GM10248 (cell line): ENCODE measurements at regions of chr9 and their contacts with region 1.

Region 1: GRCh38 chr9:124708633-124709291 is 62.3 kb downstream of the NR6A1 start:
- DNase-seq: no peak
- CTCF ChIP-seq: no peak

Region 2: DNA sequence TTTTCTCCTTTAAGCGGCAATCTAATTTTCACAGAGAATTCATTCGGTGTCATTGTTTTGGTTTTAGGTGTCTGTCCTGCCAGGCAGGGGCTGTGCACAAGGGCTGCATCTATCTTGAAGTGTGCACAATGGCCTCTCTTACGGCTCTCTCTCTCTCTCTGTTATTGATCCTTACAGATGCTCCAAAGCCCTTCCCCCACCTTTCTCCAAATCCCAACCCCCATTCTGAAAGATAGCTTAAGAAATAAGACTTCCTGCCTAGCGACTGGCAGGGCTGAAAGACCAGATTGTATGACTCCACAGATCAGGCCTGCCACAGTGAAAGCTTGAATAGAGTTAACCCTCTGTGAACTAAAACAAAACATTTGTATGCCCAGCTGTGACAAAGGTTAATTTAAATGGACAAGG is 115.1 kb before region 1 on chr9:
- CTCF ChIA-PET with region 1: interaction called, 27 read pairs
- POLR2A ChIA-PET with region 1: no interaction called
- DNase-seq: no peak
- CTCF ChIP-seq: no peak

Region 3: DNA sequence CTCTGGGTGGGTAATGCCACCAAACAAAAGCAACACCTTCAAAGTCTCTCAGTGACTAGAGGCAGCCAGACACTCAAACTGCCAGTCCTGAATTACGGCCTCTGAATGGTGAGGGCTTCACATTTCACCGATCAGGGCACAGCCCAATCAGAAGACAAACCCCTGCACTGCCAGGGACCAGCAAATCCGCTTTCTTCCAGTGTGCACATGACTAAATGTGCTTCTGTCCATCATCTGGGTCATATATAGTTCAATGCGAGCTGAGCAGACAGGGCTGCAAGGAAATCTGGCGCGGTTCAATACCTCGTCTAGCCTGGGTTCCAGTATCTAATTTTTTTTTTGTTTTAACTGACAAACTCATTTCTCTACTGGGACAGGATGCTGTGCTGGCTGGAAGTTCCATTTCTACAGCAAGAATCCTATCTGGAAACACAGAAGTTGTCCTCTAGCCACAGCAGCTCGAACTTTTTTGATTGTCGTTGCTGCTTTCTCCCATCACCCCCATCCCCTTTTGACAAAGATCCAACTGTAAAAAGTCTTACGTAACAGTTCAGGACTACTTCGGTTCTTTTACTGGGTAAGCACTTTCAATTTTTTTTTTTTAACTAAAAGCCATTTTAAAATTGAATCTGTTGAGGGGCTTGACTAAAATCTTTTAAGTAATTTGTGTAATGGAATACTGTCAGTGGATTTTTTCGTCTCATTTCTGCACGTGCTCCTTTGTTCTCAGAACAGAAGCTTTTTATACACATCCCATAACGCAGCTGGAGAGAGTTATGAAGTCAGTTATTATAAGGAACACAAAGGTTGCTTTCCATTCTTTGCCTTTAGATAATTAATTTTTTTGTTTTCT is 50.4 kb before region 1 on chr9:
- CTCF ChIA-PET with region 1: interaction called, 17 read pairs
- POLR2A ChIA-PET with region 1: no interaction called
- DNase-seq: peak; percentile 72
- CTCF ChIP-seq: no peak

Region 4: GRCh38 chr9:124721109-124721906 is 12.5 kb after region 1 on chr9:
- CTCF ChIA-PET with region 1: interaction called, 18 read pairs
- POLR2A ChIA-PET with region 1: no interaction called
- DNase-seq: no peak
- CTCF ChIP-seq: no peak

Region 5: GRCh38 chr9:124754289-124754688 is 45.5 kb after region 1 on chr9:
- CTCF ChIA-PET with region 1: interaction called, 14 read pairs
- POLR2A ChIA-PET with region 1: no interaction called
- DNase-seq: no peak
- CTCF ChIP-seq: peak; percentile 40